RWPE1 (cell line): ENCODE measurements at regions of chr5 and their contacts with region 1.

Region 1: DNA sequence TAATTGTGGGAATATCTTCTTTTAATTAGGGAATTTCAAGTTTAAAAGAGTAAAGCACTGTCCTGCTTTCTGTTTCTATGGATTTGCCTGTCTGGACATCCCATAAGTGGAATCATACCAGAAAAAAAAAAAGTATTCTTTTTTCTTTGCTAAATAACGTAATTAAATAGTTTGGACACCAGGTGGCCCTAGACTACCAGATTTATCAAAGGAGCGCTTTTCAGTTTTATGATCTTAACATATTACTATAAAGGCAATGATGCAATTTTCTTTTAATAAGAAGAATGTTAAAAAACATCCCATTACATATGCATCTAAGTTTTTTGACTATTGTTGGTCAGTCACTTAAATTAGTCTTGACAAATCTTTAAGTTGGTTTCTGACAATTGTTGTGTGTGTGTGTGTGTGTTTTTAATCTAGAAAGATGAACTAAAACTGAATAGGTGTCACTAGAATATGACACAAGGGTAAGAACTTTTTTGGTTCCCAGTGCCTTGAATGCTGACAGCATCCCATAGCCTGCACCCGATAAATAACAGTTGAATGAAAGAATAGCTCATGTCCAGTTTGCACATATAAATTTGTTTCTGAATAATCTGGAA is 49.5 kb downstream of the C5orf22 start:
- DNase-seq: peak; percentile 29
- H3K27ac ChIP-seq: no peak overlapping the region
- CTCF ChIP-seq: peak; percentile 62

Region 2: GRCh38 chr5:31809050-31809870 is 227.7 kb after region 1 on chr5:
- CTCF ChIA-PET with region 1: interaction called, 16 read pairs
- POLR2A ChIA-PET with region 1: no interaction called
- DNase-seq: peak; percentile 82
- H3K27ac ChIP-seq: no peak overlapping the region
- CTCF ChIP-seq: peak; percentile 84